HEK293T (cell line): ENCODE measurements at regions of chr6 and their contacts with region 1.

Region 1: GRCh38 chr6:31862344-31863227 is at the start of gene NEU1:
- DNase-seq: peak; percentile 98

Region 2: GRCh38 chr6:31806465-31807272 is 55.9 kb before region 1 on chr6 and contains the start of gene LSM2:
- CTCF ChIA-PET with region 1: no interaction called
- POLR2A ChIA-PET with region 1: interaction called, 19 read pairs
- DNase-seq: peak; percentile 100

Region 3: GRCh38 chr6:31815025-31815838 is 47.4 kb before region 1 on chr6 and contains the starts of genes HSPA1A and HSPA1L:
- CTCF ChIA-PET with region 1: no interaction called
- POLR2A ChIA-PET with region 1: interaction called, 13 read pairs
- DNase-seq: no peak

Region 4: GRCh38 chr6:31834434-31835198 is 28.0 kb before region 1 on chr6:
- CTCF ChIA-PET with region 1: interaction called, 6 read pairs
- POLR2A ChIA-PET with region 1: interaction called, 104 read pairs
- DNase-seq: peak; percentile 85

Region 5: GRCh38 chr6:31877125-31877650 is 14.6 kb after region 1 on chr6:
- CTCF ChIA-PET with region 1: no interaction called
- POLR2A ChIA-PET with region 1: interaction called, 14 read pairs
- DNase-seq: no peak

Region 6: GRCh38 chr6:31901953-31902643 is 39.5 kb after region 1 on chr6 and contains the start of gene ZBTB12:
- CTCF ChIA-PET with region 1: no interaction called
- POLR2A ChIA-PET with region 1: interaction called, 13 read pairs
- DNase-seq: peak; percentile 87

Region 7: DNA sequence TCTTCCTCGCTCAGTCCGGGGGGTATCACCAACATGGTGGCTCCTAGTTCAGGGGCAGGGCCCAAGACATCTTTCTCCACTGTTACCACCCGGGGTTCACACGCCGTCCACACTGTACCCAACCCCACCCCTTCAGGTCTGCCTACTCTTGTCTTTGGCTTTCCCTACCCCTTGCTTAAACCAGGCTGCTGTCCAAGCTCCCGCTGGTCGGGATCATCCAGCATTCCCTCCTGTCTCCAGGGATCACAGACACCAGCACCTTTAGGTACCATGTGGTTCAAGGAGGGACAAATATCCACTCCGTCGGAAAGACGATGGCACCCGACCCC is 95.8 kb after region 1 on chr6:
- CTCF ChIA-PET with region 1: no interaction called
- POLR2A ChIA-PET with region 1: no interaction called
- DNase-seq: no peak